Esophagus muscularis mucosa (tissue), 4 donors: ENCODE measurements at regions of chr12 and their contacts with region 1.

Region 1: DNA sequence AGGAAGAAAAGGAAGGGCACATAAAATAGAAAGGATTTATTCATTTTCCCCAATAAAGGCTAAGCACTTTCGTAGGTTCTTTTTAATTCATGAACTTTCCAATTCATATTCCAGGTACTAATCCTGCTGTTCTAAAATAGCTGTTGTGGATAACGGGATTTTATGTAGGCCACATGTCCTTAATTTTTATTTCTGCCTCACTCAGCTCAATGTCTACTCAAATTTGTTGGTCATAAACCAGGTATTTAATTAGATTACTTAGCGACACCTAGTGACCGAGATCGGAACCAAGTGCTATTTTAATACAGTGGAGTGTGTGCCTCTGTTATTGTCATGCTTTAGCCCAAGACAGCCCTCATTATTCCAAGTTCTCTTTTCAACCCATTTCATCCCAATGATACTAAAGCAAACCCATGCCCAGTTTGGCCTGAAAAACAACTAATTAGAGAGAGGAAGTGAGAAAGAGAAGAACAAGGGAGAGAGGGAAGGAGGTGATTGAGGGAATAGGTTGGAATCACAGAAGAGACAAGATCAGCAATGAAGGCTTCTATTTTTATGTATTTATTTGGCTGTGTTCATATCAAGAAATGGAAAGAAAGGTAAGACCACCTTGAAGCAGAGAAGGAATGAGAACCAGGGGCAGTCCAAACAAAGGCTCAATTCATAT is 45.9 kb upstream of the IFNG-AS1 start:
- DNase-seq: no peak
- H3K4me3 ChIP-seq: no peak overlapping the region
- H3K27ac ChIP-seq: peak overlapping the region in 1 of 4 donors; percentile 33
- H3K4me1 ChIP-seq: peaks cover 14 to 36% (median 26%) of the 10 kb centered on the region in 4 donors
- H3K27me3 ChIP-seq: no peaks in the 10 kb centered on the region
- CTCF ChIP-seq: peak; percentile 73 to 82 (median 79)
- EP300 ChIP-seq: no peak
- POLR2A ChIP-seq: no peak

Region 2: GRCh38 chr12:67430708-67431335 is 512.5 kb before region 1 on chr12:
- intact Hi-C with region 1: loop called (anchors 2 kb)
- DNase-seq: no peak
- H3K4me3 ChIP-seq: no peak overlapping the region
- H3K27ac ChIP-seq: peak overlapping the region; percentile 28 to 59 (median 56)
- H3K4me1 ChIP-seq: peaks cover 16 to 63% (median 41%) of the 10 kb centered on the region in 4 donors
- H3K27me3 ChIP-seq: no peaks in the 10 kb centered on the region
- CTCF ChIP-seq: peak; percentile 35 to 55 (median 44)
- EP300 ChIP-seq: no peak
- POLR2A ChIP-seq: no peak

Region 3: GRCh38 chr12:67710582-67710981 is 232.8 kb before region 1 on chr12:
- intact Hi-C with region 1: loop called (anchors 10 kb)
- DNase-seq: no peak
- H3K4me3 ChIP-seq: no peak overlapping the region
- H3K27ac ChIP-seq: no peak overlapping the region
- H3K4me1 ChIP-seq: peaks cover 9 to 16% (median 13%) of the 10 kb centered on the region in 4 donors
- H3K27me3 ChIP-seq: no peaks in the 10 kb centered on the region
- CTCF ChIP-seq: no peak
- EP300 ChIP-seq: no peak
- POLR2A ChIP-seq: no peak

Region 4: DNA sequence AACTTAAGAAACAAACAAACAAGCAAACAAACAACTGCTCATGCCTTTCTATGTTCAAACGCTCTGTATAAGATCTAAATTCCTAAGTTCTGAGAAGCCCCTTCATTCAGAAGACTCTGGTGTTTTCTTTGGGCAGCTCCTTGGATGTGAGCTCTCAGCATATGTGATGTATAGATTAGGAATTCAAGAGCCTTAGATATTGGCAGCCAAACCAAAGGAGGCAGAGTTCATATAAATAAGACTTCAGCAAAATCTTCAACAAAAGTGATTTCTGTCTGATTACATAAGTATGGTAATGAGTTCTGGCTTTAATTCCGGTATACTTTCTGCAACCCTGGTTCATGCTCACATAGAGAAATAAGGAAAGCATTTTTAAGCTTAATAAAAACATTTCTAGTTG is 149.2 kb before region 1 on chr12:
- intact Hi-C with region 1: no loop called
- DNase-seq: no peak
- H3K4me3 ChIP-seq: no peak overlapping the region
- H3K27ac ChIP-seq: no peak overlapping the region
- H3K4me1 ChIP-seq: peaks cover 26 to 31% (median 27%) of the 10 kb centered on the region in 4 donors
- H3K27me3 ChIP-seq: no peaks in the 10 kb centered on the region
- CTCF ChIP-seq: no peak
- EP300 ChIP-seq: no peak
- POLR2A ChIP-seq: no peak

Region 5: GRCh38 chr12:68591734-68592418 is 648.5 kb after region 1 on chr12:
- intact Hi-C with region 1: no loop called
- DNase-seq: no peak
- H3K4me3 ChIP-seq: no peak overlapping the region
- H3K27ac ChIP-seq: no peak overlapping the region
- H3K4me1 ChIP-seq: no peaks in the 10 kb centered on the region
- H3K27me3 ChIP-seq: no peaks in the 10 kb centered on the region
- CTCF ChIP-seq: no peak
- EP300 ChIP-seq: no peak
- POLR2A ChIP-seq: no peak